GM12878 (cell line): ENCODE measurements at regions of chr3 and their contacts with region 1.

Region 1: GRCh38 chr3:10192953-10193691 is 28.4 kb downstream of the IRAK2 start:
- DNase-seq: peak; percentile 91
- ATAC-seq: peak; percentile 73
- H3K4me3 ChIP-seq: no peak overlapping the region
- H3K27ac ChIP-seq: peak overlapping the region; percentile 98
- H3K4me1 ChIP-seq: peaks cover 74% of the 10 kb centered on the region
- H3K27me3 ChIP-seq: no peaks in the 10 kb centered on the region
- CTCF ChIP-seq: peak; percentile 46 to 52 (median 50); a peak in 5 of 6 replicates
- EP300 ChIP-seq: peak in 1 of 2 experiments; percentile 52; a peak in 2 of 4 replicates
- POLR2A ChIP-seq: peak; percentile 19; the same call in 1 of the 2 replicates
- RAD21 ChIP-seq: peak; percentile 14; the same call in 1 of the 2 replicates

Region 2: GRCh38 chr3:10142707-10143566 is 50.2 kb before region 1 on chr3:
- CTCF ChIA-PET with region 1: interaction called, 9 read pairs
- POLR2A ChIA-PET with region 1: interaction called, 23 read pairs
- RAD21 ChIA-PET with region 1: interaction called, 13 read pairs
- SMC1A ChIA-PET with region 1: interaction called, 5 read pairs
- in situ Hi-C with region 1: no loop called
- intact Hi-C with region 1: loop called (anchors 5 kb)
- DNase-seq: no peak
- ATAC-seq: peak; percentile 21
- H3K4me3 ChIP-seq: peak overlapping the region; percentile 100
- H3K27ac ChIP-seq: peak overlapping the region; percentile 61; the same call in 1 of the 2 replicates
- H3K4me1 ChIP-seq: no peaks in the 10 kb centered on the region; the same call in 1 of the 2 replicates
- H3K27me3 ChIP-seq: no peaks in the 10 kb centered on the region
- CTCF ChIP-seq: no peak
- EP300 ChIP-seq: no peak
- POLR2A ChIP-seq: no peak; the same call in 1 of the 2 replicates
- RAD21 ChIP-seq: no peak

Region 3: GRCh38 chr3:10173926-10174435 is 19.1 kb before region 1 on chr3:
- CTCF ChIA-PET with region 1: interaction called, 6 read pairs
- POLR2A ChIA-PET with region 1: interaction called, 14 read pairs
- RAD21 ChIA-PET with region 1: interaction called, 12 read pairs
- SMC1A ChIA-PET with region 1: interaction called, 30 read pairs
- in situ Hi-C with region 1: no loop called
- intact Hi-C with region 1: no loop called
- DNase-seq: no peak
- ATAC-seq: peak; percentile 52
- H3K4me3 ChIP-seq: no peak overlapping the region
- H3K27ac ChIP-seq: no peak overlapping the region
- H3K4me1 ChIP-seq: peaks cover 18% of the 10 kb centered on the region
- H3K27me3 ChIP-seq: no peaks in the 10 kb centered on the region
- CTCF ChIP-seq: no peak
- EP300 ChIP-seq: no peak
- POLR2A ChIP-seq: no peak
- RAD21 ChIP-seq: no peak

Region 4: DNA sequence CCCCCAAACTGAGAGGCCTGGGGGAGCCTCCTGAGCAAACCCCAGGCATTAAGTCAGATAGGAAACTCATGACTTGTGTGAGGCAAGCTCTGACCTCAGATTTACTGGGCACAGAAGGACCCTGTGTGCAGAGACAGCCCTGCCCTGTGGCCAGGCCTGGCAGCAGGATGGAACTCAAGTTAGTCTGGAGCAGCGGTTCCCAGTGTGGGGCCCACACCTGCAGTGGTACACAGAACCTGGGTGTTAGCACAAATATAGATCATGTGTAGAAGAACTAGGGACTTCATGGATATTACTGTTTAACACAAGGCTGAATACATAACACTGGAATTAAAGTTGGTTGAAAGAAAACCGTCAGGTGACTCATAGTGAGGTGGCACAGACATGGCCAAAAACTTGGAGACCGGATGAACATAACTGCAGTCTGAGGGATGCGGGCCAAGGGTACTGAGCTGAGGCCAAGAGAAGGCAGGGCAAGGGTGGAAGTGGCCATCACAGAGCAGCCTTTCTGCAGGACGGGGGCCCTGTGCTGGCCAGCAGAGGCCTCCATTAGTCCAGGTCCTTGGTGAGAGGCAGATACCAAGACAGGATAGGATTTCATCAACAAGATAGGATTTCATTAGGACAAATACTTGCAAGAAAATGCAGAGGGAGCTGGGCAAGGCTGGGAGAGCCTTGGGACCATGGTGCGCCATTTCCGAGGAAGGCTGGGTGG is 12.5 kb after region 1 on chr3:
- CTCF ChIA-PET with region 1: interaction called, 6 read pairs
- POLR2A ChIA-PET with region 1: interaction called, 7 read pairs
- RAD21 ChIA-PET with region 1: interaction called, 18 read pairs
- SMC1A ChIA-PET with region 1: interaction called, 20 read pairs
- in situ Hi-C with region 1: no loop called
- intact Hi-C with region 1: no loop called
- DNase-seq: no peak
- ATAC-seq: no peak; the same call in 2 of the 3 replicates
- H3K4me3 ChIP-seq: no peak overlapping the region
- H3K27ac ChIP-seq: no peak overlapping the region
- H3K4me1 ChIP-seq: no peaks in the 10 kb centered on the region
- H3K27me3 ChIP-seq: no peaks in the 10 kb centered on the region
- CTCF ChIP-seq: no peak
- EP300 ChIP-seq: no peak
- POLR2A ChIP-seq: no peak
- RAD21 ChIP-seq: no peak

Region 5: GRCh38 chr3:10219737-10220136 is 26.6 kb after region 1 on chr3:
- CTCF ChIA-PET with region 1: interaction called, 31 read pairs
- POLR2A ChIA-PET with region 1: interaction called, 64 read pairs
- RAD21 ChIA-PET with region 1: interaction called, 99 read pairs
- SMC1A ChIA-PET with region 1: interaction called, 165 read pairs
- in situ Hi-C with region 1: no loop called
- intact Hi-C with region 1: loop called (anchors 1 kb)
- DNase-seq: no peak
- ATAC-seq: no peak
- H3K4me3 ChIP-seq: no peak overlapping the region
- H3K27ac ChIP-seq: no peak overlapping the region
- H3K4me1 ChIP-seq: peaks cover 37% of the 10 kb centered on the region
- H3K27me3 ChIP-seq: no peaks in the 10 kb centered on the region
- CTCF ChIP-seq: no peak
- EP300 ChIP-seq: no peak
- POLR2A ChIP-seq: no peak
- RAD21 ChIP-seq: no peak

Region 6: GRCh38 chr3:10248184-10249080 is 55.3 kb after region 1 on chr3 and contains the start of gene TATDN2:
- CTCF ChIA-PET with region 1: no interaction called
- POLR2A ChIA-PET with region 1: interaction called, 11 read pairs
- RAD21 ChIA-PET with region 1: interaction called, 4 read pairs
- SMC1A ChIA-PET with region 1: interaction called, 5 read pairs
- in situ Hi-C with region 1: no loop called
- intact Hi-C with region 1: no loop called
- DNase-seq: peak; percentile 95
- ATAC-seq: peak; percentile 96
- H3K4me3 ChIP-seq: peak within 1 kb of the TSS; percentile 97
- H3K27ac ChIP-seq: peak within 1 kb of the TSS; percentile 81
- H3K4me1 ChIP-seq: peaks cover 6% of the 10 kb centered on the region; the same call in 1 of the 2 replicates
- H3K27me3 ChIP-seq: no peaks in the 10 kb centered on the region
- CTCF ChIP-seq: no peak
- EP300 ChIP-seq: no peak
- POLR2A ChIP-seq: peak; percentile 85
- RAD21 ChIP-seq: no peak
- polyA plus RNA-seq, gene TATDN2: 5.7 to 9.1 TPM